ENCODE measurements at regions of chr17 and their contacts with region 1.

Region 1: GRCh38 chr17:1628856-1629646 is 417 bp upstream of the SLC43A2 start:
- DNase-seq: peak; percentile 97
- ATAC-seq: peak; percentile 67
- H3K4me3 Mint-ChIP-seq: peak overlapping the region; percentile 87
- H3K27ac Mint-ChIP-seq: peak overlapping the region; percentile 97
- H3K4me1 Mint-ChIP-seq: peaks cover 25% of the 10 kb centered on the region
- H3K27me3 Mint-ChIP-seq: peaks cover 19% of the 10 kb centered on the region
- CTCF ChIP-seq: no peak

Region 2: GRCh38 chr17:1516388-1517161 is 112.5 kb before region 1 on chr17 and contains the start of gene INPP5K:
- CTCF ChIA-PET with region 1: interaction called, 19 read pairs
- POLR2A ChIA-PET with region 1: interaction called, 6 read pairs
- DNase-seq: peak; percentile 93
- ATAC-seq: peak; percentile 93
- H3K4me3 Mint-ChIP-seq: peak within 1 kb of the TSS; percentile 88
- H3K27ac Mint-ChIP-seq: peak within 1 kb of the TSS; percentile 97
- H3K4me1 Mint-ChIP-seq: peaks cover 14% of the 10 kb centered on the region
- H3K27me3 Mint-ChIP-seq: no peaks in the 10 kb centered on the region
- CTCF ChIP-seq: no peak
- total RNA-seq, gene INPP5K: 17.1 to 26.8 TPM (median 18.5 TPM) in 3 replicates

Region 3: GRCh38 chr17:1561400-1562175 is 67.5 kb before region 1 on chr17:
- CTCF ChIA-PET with region 1: interaction called, 10 read pairs
- POLR2A ChIA-PET with region 1: no interaction called
- DNase-seq: peak; percentile 42
- ATAC-seq: peak; percentile 18
- H3K4me3 Mint-ChIP-seq: peak overlapping the region; percentile 84
- H3K27ac Mint-ChIP-seq: peak overlapping the region; percentile 29
- H3K4me1 Mint-ChIP-seq: peaks cover 33% of the 10 kb centered on the region
- H3K27me3 Mint-ChIP-seq: peaks cover 10% of the 10 kb centered on the region
- CTCF ChIP-seq: no peak

Region 4: DNA sequence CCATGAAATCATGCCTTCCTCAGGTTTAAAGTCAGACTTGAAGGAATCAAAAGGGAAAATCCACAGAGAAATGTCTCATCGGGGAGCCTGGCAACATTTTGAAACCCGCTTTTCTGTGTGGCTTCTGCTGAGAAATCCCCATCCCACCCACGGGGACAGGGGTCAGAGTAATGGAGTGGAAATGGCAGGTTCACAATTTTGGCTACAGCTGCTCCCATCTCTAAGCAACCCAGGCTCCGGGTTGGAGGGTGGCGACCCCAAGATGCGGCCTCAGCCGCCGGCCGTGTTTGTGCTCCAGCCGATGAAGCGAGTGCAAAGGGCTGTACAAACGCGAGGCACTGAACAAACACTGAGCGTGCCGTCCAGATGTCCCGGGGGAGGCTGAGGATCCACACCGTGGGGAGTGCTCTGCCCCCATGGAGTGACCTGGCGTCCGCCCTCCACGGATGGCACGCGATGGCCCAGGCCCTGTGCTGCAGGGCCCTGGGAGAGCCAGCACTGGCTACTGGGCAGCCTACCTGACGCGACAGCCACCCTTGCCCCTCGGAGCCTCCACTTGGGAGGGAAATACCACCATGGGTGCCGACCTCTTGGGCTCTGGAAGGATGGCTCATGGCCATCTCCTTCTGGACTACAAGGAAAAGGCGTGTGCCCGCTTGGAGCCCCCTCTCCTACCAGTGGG is 22.6 kb before region 1 on chr17:
- CTCF ChIA-PET with region 1: interaction called, 10 read pairs
- POLR2A ChIA-PET with region 1: interaction called, 5 read pairs
- DNase-seq: no peak
- ATAC-seq: no peak
- H3K4me3 Mint-ChIP-seq: no peak overlapping the region
- H3K27ac Mint-ChIP-seq: no peak overlapping the region
- H3K4me1 Mint-ChIP-seq: peaks cover 9% of the 10 kb centered on the region
- H3K27me3 Mint-ChIP-seq: no peaks in the 10 kb centered on the region
- CTCF ChIP-seq: no peak

Region 5: DNA sequence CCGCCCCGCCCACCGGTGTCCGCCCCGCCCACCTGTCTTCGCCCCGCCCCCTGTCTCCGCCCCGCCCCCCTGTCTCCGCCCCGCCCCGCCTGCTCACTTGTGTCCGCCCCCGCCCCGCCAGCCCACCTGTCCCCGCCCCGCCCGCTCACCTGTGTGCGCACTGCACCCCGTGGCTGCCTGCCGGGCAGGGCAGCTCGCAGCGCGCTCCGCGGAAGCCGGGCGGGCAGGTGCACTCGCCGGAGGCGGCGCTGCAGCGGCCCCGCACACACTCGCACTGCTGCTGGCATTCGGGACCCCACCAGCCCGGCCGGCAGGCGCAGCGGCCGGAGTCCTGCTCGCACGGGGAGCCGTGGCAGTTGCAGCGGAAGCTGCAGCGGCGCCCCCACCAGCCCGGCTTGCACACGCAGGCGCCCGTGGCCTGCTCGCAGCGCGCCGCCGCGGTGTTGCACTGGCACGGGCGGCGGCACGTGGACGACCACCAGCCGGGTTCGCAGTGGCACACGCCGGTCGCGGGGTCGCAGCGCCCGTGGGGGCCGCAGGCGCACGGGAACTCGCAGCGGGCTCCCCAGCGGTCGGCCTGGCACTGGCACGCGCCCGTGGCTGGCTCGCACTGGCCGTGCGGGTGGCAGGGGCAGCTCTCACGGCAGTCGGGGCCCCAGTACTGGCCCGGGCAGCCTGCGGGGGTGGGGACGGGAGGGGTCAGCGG is 14.4 kb after region 1 on chr17:
- CTCF ChIA-PET with region 1: interaction called, 59 read pairs
- POLR2A ChIA-PET with region 1: interaction called, 12 read pairs
- DNase-seq: peak; percentile 91
- ATAC-seq: peak; percentile 74
- H3K4me3 Mint-ChIP-seq: no peak overlapping the region; the same call in 1 of the 2 replicates
- H3K27ac Mint-ChIP-seq: no peak overlapping the region
- H3K4me1 Mint-ChIP-seq: peaks cover 44% of the 10 kb centered on the region
- H3K27me3 Mint-ChIP-seq: peaks cover 6% of the 10 kb centered on the region
- CTCF ChIP-seq: no peak

Measured in WTC11 (cell line).